Mammary epithelial cell (primary cell): ENCODE measurements at regions of chr16 and their contacts with region 1.

Region 1: DNA sequence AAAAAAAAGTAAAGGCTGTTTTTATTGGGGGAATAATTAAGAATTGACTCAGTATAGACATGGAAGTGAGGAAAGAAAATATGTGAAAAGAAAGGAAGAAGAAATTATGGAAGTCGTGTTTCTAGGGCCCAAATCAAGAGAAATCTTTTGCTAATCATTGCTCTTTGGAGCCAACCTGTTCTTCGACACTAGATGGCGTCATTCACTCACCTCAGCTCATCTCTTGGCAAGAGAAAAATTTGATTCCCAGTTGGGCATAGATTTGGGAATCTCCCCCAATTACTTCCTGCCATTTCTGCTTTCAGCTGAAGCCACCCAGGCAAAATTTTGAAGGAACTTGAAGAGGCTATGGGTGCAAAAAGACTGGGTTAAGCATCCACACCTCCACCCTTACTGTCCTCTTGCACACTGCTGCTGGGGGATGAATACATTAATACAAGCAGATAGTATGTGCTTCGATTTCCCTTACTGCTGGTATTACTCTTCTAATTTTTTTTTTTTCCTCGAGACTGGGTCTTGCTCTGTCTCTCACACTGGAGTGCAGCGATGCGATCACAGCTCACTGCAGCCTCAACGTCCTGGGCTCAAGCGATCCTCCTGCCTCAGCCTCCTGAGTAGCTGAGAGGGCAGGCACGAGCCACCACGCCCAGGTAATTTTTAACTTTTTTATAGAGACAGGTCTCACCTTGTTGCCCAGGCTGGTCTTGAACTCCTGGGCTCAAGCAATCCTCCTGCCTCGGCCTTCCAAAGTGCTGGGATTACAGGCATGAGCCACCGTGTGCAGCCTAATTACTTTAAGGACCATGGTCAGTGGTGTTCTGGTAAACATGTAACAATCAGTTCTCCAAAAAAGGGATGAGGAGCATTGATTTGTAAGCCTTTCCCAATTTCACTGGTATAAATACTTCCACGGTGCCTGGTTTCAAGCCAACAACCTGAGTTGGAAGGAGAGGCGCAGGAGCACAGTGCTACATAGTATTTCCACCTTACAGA is 13.5 kb downstream of the PSMD7 start:
- DNase-seq: peak; percentile 34
- H3K4me3 ChIP-seq: no peak overlapping the region
- H3K27ac ChIP-seq: no peak overlapping the region
- H3K4me1 ChIP-seq: no peaks in the 10 kb centered on the region
- H3K27me3 ChIP-seq: no peaks in the 10 kb centered on the region
- CTCF ChIP-seq: peak; percentile 73 to 79

Region 2: DNA sequence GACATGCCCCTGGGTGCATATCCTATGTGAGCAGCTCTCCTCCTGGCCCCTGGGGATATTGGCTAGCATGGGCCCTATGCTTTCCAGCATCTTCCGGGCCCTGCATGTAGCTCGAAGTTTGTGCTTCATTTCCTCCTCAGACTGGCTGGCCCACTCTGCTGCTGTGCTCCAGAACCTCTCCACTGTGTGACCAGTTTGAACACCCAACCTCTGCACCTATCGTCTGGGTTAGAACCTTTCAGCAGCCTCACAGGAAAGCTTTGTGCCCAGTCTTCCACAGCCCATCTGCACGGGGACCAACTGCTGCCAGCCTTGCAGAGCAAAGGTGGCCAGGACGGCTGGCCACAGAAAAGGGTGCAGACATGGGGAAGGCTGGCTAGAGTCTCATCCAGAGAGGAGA is 121.4 kb after region 1 on chr16:
- CTCF ChIA-PET with region 1: no interaction called
- dilution Hi-C with region 1: no loop called
- in situ Hi-C with region 1: loop called in 1 of 2 experiments (anchors 25 kb)
- intact Hi-C with region 1: loop called (anchors 5 kb)
- DNase-seq: no peak
- H3K4me3 ChIP-seq: no peak overlapping the region
- H3K27ac ChIP-seq: no peak overlapping the region
- H3K4me1 ChIP-seq: peaks cover 8% of the 10 kb centered on the region
- H3K27me3 ChIP-seq: no peaks in the 10 kb centered on the region
- CTCF ChIP-seq: no peak

Region 3: GRCh38 chr16:74448992-74449434 is 138.9 kb after region 1 on chr16:
- CTCF ChIA-PET with region 1: no interaction called
- dilution Hi-C with region 1: no loop called
- in situ Hi-C with region 1: loop called in 1 of 2 experiments (anchors 25 kb)
- intact Hi-C with region 1: no loop called
- DNase-seq: peak; percentile 81
- H3K4me3 ChIP-seq: no peak overlapping the region
- H3K27ac ChIP-seq: peak overlapping the region; percentile 82
- H3K4me1 ChIP-seq: peaks cover 36% of the 10 kb centered on the region
- H3K27me3 ChIP-seq: no peaks in the 10 kb centered on the region
- CTCF ChIP-seq: no peak

Region 4: GRCh38 chr16:74480141-74481029 is 170.3 kb after region 1 on chr16:
- CTCF ChIA-PET with region 1: no interaction called
- dilution Hi-C with region 1: no loop called
- in situ Hi-C with region 1: no loop called
- intact Hi-C with region 1: no loop called
- DNase-seq: peak; percentile 72
- H3K4me3 ChIP-seq: no peak overlapping the region
- H3K27ac ChIP-seq: peak overlapping the region; percentile 5
- H3K4me1 ChIP-seq: peaks cover 19% of the 10 kb centered on the region
- H3K27me3 ChIP-seq: no peaks in the 10 kb centered on the region
- CTCF ChIP-seq: no peak